Activated B cell treated with CpG ODN at 0.5 μM for 24 hours (primary cell): ENCODE measurements at regions of chr16 and their contacts with region 1.

Region 1: DNA sequence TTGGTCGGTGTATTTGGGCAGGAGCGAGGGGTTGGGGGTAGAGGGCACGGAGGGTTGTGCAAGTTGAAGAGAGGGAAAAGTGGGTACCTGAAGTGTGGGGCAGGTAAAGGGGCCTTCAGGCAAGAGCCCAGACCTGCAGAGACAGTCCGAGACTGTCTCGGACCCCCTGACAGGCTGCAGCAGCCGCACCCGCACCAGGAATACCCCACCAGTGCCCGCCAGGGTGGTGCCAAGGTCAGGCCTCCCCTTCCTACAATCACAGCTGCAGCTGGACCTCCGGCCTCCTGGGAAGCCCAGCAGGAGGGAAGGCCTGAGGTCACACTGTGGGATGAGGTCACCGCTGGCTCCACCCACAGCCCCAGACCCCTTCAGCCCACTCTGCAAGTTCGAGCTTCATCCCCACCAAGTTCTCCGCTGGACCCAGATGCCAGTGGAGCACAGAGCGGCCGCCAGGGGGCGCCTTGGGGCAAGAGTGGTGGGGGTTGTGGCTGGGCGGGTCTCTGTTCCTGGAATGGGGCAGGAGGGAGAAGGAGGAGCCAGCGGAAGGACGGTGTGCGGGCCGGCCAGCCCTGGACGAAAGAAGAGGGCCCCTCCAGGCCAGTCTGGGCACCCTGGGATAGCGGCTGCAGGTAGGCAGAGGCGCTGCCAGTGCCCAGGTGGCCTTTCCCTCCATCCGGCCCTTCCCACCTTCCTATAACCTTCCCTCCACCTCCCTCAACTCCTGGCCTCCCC is at the start of gene HSD3B7:
- DNase-seq: peak; percentile 80
- ATAC-seq: peak; percentile 85
- H3K4me3 Mint-ChIP-seq: no peak within 1 kb of the TSS
- H3K27ac Mint-ChIP-seq: no peak within 1 kb of the TSS
- H3K4me1 Mint-ChIP-seq: no peaks in the 10 kb centered on the region
- H3K27me3 Mint-ChIP-seq: no peaks in the 10 kb centered on the region
- CTCF ChIP-seq: peak; percentile 80
- total RNA-seq, gene HSD3B7: 1.3 and 1.6 TPM in 2 replicates

Region 2: DNA sequence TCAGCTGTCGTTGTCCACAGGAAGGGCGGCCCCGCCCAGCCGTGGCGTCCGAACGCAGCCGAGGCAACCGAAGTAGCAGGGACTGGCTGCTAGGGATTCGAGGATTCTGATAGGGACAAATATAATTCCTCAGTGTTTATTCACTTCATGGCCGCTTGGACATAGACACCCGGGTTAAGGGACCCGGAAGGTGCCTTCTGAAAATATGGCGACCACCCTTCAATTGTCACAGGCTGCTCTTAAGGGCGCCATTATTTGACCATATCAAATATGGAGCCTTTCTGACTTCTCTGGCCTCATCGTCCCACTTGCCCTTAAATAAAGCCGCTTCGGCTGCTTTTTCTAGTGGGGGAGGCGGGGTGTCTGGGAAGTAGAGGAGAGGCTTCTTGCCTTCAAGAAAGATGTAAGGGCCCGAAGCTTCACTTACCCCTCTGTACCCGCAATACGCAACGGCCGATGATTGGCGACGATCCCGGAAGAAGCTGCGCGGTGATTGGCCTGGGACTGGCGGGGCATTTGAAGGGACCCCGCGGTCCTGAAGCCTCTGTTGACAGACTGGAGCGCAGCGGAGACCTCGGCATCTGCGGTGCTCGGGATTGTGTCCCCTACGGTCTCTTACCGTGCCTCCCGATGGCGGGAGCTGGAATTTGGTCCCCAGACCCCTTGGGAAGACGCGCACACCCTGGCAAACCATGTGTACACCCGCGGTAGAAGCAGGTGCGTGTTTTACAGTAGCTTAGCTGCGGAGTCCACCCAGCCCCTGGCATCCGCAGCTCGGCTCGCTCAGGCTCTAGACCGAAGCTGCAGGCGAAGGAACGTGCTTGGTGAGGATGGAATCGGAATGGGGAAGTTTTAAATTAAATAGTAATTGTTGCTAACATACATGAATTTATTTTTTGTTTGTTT is 412.9 kb before region 1 on chr16 and contains the start of gene ZNF688:
- CTCF ChIA-PET with region 1: no interaction called
- POLR2A ChIA-PET with region 1: no interaction called
- intact Hi-C with region 1: no loop called
- DNase-seq: peak; percentile 78
- ATAC-seq: peak; percentile 86
- H3K4me3 Mint-ChIP-seq: peak within 1 kb of the TSS; percentile 89
- H3K27ac Mint-ChIP-seq: peak within 1 kb of the TSS; percentile 96
- H3K4me1 Mint-ChIP-seq: peaks cover 41% of the 10 kb centered on the region
- H3K27me3 Mint-ChIP-seq: no peaks in the 10 kb centered on the region
- CTCF ChIP-seq: no peak
- total RNA-seq, gene ZNF688: 13.9 and 14.7 TPM in 2 replicates

Region 3: DNA sequence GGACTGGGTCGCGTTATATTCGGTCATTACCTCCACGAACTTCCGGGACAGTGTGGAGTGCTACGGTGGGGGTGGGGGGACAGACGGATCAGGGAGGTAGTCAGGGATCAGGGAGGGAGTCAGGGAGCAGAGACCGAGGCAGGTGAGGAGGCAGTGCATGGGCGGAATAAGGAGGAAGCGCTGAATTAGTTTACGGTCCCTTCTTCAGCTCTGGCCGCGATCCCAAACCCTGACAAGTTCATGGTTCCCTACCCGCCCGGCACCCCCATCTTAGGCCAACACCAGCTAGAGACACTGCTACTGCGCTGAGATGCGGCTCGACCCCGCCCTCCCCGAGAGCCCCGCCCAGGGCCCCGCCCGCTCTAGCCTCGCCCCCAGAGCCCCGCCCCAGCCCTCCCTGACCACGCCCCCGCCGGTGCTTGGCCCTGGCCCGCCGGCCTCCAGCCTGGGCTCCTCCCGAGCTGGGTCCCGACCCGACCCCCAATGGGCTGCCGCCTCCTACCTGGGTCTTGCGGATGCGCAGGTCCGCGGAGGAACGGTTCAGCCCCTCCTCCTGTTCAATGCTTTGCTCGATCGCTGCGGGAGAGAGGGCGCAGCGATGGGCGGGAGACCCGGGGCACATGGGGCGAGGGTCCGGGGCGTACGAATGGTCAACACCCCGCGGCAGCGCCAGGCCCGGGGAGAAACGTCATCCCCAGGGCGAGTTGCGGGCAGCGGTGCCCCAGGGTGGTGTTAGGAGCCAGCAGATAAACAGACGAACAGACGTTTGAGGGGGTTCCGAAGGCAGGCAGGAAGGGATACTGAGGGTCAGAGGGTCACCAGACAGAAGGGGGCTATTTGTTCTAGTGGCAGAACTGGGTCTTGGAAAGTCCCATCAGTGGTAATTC is 12.4 kb after region 1 on chr16:
- CTCF ChIA-PET with region 1: interaction called, 18 read pairs
- POLR2A ChIA-PET with region 1: interaction called, 7 read pairs
- intact Hi-C with region 1: no loop called
- DNase-seq: peak; percentile 68
- ATAC-seq: peak; percentile 99
- H3K4me3 Mint-ChIP-seq: peak overlapping the region; percentile 87
- H3K27ac Mint-ChIP-seq: peak overlapping the region; percentile 76
- H3K4me1 Mint-ChIP-seq: peaks cover 12% of the 10 kb centered on the region
- H3K27me3 Mint-ChIP-seq: no peaks in the 10 kb centered on the region
- CTCF ChIP-seq: no peak

Region 4: GRCh38 chr16:31094424-31095120 is 109.7 kb after region 1 on chr16 and contains the start of gene VKORC1:
- CTCF ChIA-PET with region 1: interaction called, 5 read pairs
- POLR2A ChIA-PET with region 1: interaction called, 3 read pairs
- intact Hi-C with region 1: loop called (anchors 1 kb)
- DNase-seq: peak; percentile 77
- ATAC-seq: peak; percentile 88
- H3K4me3 Mint-ChIP-seq: peak within 1 kb of the TSS; percentile 95
- H3K27ac Mint-ChIP-seq: peak within 1 kb of the TSS; percentile 93
- H3K4me1 Mint-ChIP-seq: peaks cover 25% of the 10 kb centered on the region
- H3K27me3 Mint-ChIP-seq: no peaks in the 10 kb centered on the region
- CTCF ChIP-seq: no peak
- total RNA-seq, gene VKORC1: 38.7 and 41.9 TPM in 2 replicates

Region 5: GRCh38 chr16:31333686-31334649 is 349.1 kb after region 1 on chr16:
- CTCF ChIA-PET with region 1: interaction called, 4 read pairs
- POLR2A ChIA-PET with region 1: no interaction called
- intact Hi-C with region 1: loop called (anchors 1 kb)
- DNase-seq: no peak
- ATAC-seq: peak; percentile 91
- H3K4me3 Mint-ChIP-seq: no peak overlapping the region
- H3K27ac Mint-ChIP-seq: no peak overlapping the region
- H3K4me1 Mint-ChIP-seq: peaks cover 18% of the 10 kb centered on the region
- H3K27me3 Mint-ChIP-seq: peaks cover 13% of the 10 kb centered on the region
- CTCF ChIP-seq: no peak

Region 6: GRCh38 chr16:31382485-31383161 is 397.8 kb after region 1 on chr16:
- CTCF ChIA-PET with region 1: no interaction called
- POLR2A ChIA-PET with region 1: no interaction called
- intact Hi-C with region 1: loop called (anchors 1 kb)
- DNase-seq: peak; percentile 50
- ATAC-seq: peak; percentile 86
- H3K4me3 Mint-ChIP-seq: no peak overlapping the region
- H3K27ac Mint-ChIP-seq: no peak overlapping the region
- H3K4me1 Mint-ChIP-seq: peaks cover 11% of the 10 kb centered on the region
- H3K27me3 Mint-ChIP-seq: peaks cover 2% of the 10 kb centered on the region
- CTCF ChIP-seq: no peak

Region 7: GRCh38 chr16:31440516-31441184 is 455.8 kb after region 1 on chr16:
- CTCF ChIA-PET with region 1: interaction called, 27 read pairs
- POLR2A ChIA-PET with region 1: no interaction called
- intact Hi-C with region 1: loop called (anchors 1 kb)
- DNase-seq: no peak
- ATAC-seq: no peak
- H3K4me3 Mint-ChIP-seq: peak overlapping the region; percentile 24
- H3K27ac Mint-ChIP-seq: no peak overlapping the region
- H3K4me1 Mint-ChIP-seq: peaks cover 19% of the 10 kb centered on the region
- H3K27me3 Mint-ChIP-seq: peaks cover 2% of the 10 kb centered on the region
- CTCF ChIP-seq: no peak

Region 8: GRCh38 chr16:31868691-31869167 is 883.9 kb after region 1 on chr16:
- CTCF ChIA-PET with region 1: interaction called, 13 read pairs
- POLR2A ChIA-PET with region 1: interaction called, 3 read pairs
- intact Hi-C with region 1: loop called (anchors 1 kb)
- DNase-seq: peak; percentile 60
- ATAC-seq: no peak
- H3K4me3 Mint-ChIP-seq: peak overlapping the region; percentile 41
- H3K27ac Mint-ChIP-seq: peak overlapping the region; percentile 66
- H3K4me1 Mint-ChIP-seq: peaks cover 46% of the 10 kb centered on the region
- H3K27me3 Mint-ChIP-seq: peaks cover 6% of the 10 kb centered on the region
- CTCF ChIP-seq: peak; percentile 35